ENCODE measurements at regions of chr6 and their contacts with region 1.

Region 1: GRCh38 chr6:93555292-93555691 is 135.9 kb upstream of the EPHA7 start:
- DNase-seq: no peak

Region 2: DNA sequence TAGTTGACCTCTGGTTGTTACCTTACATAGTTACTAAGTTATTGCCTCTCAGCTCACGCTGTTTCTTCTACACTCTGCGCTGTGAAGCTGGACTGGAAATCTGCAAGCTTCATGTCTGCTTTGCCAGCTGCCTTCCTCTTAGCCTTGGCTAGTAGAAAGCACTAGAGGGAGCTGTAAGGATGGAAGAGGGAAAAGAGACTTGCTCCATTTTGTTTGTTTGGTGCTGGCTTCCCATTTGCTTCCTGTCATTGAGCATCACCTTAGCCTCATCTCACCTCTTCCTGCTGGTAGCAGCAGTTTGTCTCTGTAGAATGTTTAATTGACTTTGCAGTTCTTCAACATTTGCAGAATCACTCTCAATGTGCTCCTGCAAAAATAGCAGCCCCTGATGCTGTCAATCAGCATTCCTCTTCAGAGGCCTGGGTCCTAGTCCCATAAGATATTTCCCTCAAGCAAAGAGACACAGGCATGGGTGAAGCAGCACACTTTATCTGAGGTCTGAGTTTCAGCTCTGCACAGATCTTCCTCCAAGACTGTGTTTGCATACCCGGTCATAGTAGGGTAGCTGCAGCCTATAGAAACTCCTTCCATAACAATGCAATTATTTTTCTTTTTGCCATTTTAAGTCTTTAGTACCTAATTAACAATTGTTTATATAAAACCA is 166.2 kb after region 1 on chr6:
- CTCF ChIA-PET with region 1: interaction called, 14 read pairs
- POLR2A ChIA-PET with region 1: no interaction called
- DNase-seq: peak; percentile 39

Measured in HEK293T (cell line).